ENCODE measurements at regions of chr1 and their contacts with region 1.

Region 1: GRCh38 chr1:94854458-94855306 is 34.5 kb downstream of the SLC44A3 start:
- DNase-seq: peak; percentile 79 to 91 (median 85)
- ATAC-seq: peak; percentile 95 to 99 (median 98)
- H3K4me3 ChIP-seq: peak overlapping the region in 2 of 4 donors; percentile 26 to 27
- H3K27ac ChIP-seq: peak overlapping the region in 2 of 4 donors; percentile 67 to 69
- H3K4me1 ChIP-seq: peaks cover 0 to 14% (median 0%) of the 10 kb centered on the region in 3 donors
- H3K27me3 ChIP-seq: no peaks in the 10 kb centered on the region
- CTCF ChIP-seq: peak; percentile 77 to 80 (median 78)

Region 2: GRCh38 chr1:94919241-94920030 is 64.8 kb after region 1 on chr1:
- intact Hi-C with region 1: loop called in 1 of 3 experiments (anchors 10 kb)
- DNase-seq: no peak
- ATAC-seq: peak in 3 of 4 donors; percentile 35 to 62 (median 39)
- H3K4me3 ChIP-seq: no peak overlapping the region
- H3K27ac ChIP-seq: peak overlapping the region in 1 of 4 donors; percentile 10
- H3K4me1 ChIP-seq: peaks cover 0 to 53% (median 4%) of the 10 kb centered on the region in 3 donors
- H3K27me3 ChIP-seq: no peaks in the 10 kb centered on the region
- CTCF ChIP-seq: no peak

Region 3: DNA sequence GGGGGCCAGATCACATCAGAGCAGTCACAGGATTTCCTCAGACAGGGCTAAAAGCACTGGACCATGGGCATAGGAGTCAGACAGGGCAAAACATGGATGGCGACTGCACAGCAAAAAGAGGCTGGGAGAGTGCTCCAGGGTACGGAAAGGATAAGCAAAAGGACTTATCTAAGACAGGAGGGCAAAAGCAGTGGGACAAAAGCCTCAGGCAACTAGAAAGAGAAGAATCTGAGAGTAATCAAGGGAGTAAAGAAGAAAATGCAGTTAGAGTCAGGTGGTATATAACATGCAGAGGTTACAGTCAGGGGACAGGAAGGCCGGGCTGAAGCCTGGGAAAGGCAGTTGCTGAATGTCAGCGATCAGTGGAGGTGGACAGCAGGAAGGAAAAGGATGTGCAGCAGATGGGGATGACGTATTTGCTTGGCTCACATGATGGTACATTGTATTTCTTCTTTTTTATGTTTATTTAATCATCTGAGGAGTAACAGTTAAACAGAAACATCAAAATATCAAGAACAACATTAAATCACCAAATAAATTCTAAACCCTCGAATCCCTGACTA is 135.3 kb after region 1 on chr1:
- intact Hi-C with region 1: no loop called
- DNase-seq: no peak
- ATAC-seq: peak in 1 of 4 donors; percentile 9
- H3K4me3 ChIP-seq: no peak overlapping the region
- H3K27ac ChIP-seq: peak overlapping the region in 1 of 4 donors; percentile 45
- H3K4me1 ChIP-seq: peaks cover 4 to 19% (median 12%) of the 10 kb centered on the region in 3 donors
- H3K27me3 ChIP-seq: no peaks in the 10 kb centered on the region
- CTCF ChIP-seq: no peak

Region 4: DNA sequence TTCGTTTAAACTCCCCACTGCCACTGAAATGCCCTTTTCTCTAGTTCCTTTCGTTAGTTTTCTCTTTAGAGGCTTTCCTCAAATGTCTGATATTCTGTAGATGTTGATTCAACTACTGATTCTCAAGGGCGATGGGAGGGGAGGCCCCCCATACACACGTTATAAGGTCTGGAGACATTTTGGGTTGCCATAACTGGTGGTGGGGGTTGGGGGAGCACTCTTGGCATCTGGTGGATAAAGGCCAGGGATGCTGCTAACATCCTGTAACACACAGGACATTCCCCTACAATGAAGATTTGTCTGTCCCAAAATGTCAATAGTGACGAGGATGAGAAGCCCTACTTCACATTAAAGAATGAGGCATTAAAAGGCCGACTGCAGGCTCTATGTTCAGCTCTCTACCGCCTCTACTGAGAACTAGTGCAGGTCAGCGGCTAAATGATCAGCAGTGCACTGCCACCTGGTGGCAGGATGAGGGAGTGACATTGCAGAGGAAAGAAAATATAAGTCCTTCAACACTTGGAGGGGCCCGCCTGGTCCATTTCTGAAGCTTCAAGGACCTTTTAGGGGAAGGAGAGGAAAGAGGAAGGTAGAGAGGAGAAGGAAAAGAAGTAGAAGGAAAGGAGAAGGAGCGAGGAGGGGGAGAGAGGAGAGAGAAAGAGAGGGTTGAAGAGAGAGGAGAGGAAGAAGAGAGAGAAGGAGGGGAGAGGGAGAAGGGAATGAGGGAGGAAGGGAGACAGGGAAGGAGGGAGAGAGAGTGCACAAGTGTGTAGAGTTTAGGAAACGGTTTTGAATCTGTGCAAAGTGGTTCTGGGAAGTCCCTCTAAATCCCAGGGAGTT is 188.7 kb after region 1 on chr1:
- intact Hi-C with region 1: loop called in 2 of 3 experiments (anchors 5 kb)
- DNase-seq: peak; percentile 70 to 86 (median 76)
- ATAC-seq: peak; percentile 81 to 97 (median 92)
- H3K4me3 ChIP-seq: no peak overlapping the region
- H3K27ac ChIP-seq: peak overlapping the region in 1 of 4 donors; percentile 64
- H3K4me1 ChIP-seq: peaks cover 0 to 15% (median 9%) of the 10 kb centered on the region in 3 donors
- H3K27me3 ChIP-seq: no peaks in the 10 kb centered on the region
- CTCF ChIP-seq: peak; percentile 93 to 98 (median 97)

Measured in pancreas (tissue), 10 donors.